HCT116 (cell line): ENCODE measurements at regions of chr4 and their contacts with region 1.

Region 1: DNA sequence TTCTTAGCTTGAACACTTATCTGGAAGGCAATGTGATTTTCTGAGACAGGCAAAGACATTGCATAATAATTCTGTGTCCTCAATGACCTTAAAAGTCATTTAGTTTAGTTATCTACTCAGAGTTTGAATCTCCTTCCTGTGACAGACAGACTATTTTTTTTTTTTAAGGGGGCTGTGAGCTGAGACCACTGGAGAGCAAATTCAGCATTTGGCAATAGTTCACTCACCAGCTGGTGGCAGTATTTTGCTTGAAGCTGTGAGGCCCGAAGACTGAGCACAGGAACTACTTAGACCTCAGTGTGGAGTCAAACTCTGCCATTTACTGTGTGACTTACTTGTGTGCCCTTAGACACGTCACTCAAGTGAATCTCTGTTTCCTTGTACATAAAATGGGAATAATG is 22.9 kb upstream of the CPE start:
- DNase-seq: peak; percentile 59
- ATAC-seq: peak; percentile 93
- H3K4me3 ChIP-seq: no peak overlapping the region
- H3K27ac ChIP-seq: no peak overlapping the region
- H3K4me1 ChIP-seq: peaks cover 0 to 3% of the 10 kb centered on the region in 2 experiments; a peak in 2 of 4 replicates
- H3K27me3 ChIP-seq: no peaks in the 10 kb centered on the region
- CTCF ChIP-seq: peak; percentile 67 to 77 (median 67)
- POLR2A ChIP-seq: no peak
- RAD21 ChIP-seq: peak; percentile 83

Region 2: DNA sequence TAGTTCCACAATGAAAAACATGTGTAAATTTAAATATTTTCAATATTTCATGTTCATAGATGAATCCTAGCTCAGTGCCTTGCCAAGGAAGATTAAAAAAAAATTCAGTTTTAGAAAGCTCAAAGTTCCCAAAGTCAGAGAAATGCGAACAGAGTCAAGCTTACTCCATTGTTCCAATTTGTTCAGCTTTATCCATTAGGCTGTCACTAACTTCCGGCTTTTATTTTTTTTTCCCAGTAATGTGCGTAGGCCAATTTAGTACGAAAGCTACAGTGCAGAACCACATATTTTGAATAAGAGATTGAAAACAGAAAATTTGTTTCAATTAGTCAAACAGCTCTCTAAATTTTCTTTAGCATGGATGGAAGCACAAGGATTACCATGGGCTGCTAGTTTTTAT is 171.7 kb before region 1 on chr4:
- CTCF ChIA-PET with region 1: no interaction called
- POLR2A ChIA-PET with region 1: no interaction called
- RAD21 ChIA-PET with region 1: no interaction called
- intact Hi-C with region 1: no loop called
- DNase-seq: no peak
- ATAC-seq: no peak
- H3K4me3 ChIP-seq: no peak overlapping the region
- H3K27ac ChIP-seq: no peak overlapping the region
- H3K4me1 ChIP-seq: no peaks in the 10 kb centered on the region
- H3K27me3 ChIP-seq: no peaks in the 10 kb centered on the region
- CTCF ChIP-seq: no peak
- POLR2A ChIP-seq: no peak
- RAD21 ChIP-seq: no peak

Region 3: GRCh38 chr4:165294907-165295306 is 61.0 kb before region 1 on chr4:
- CTCF ChIA-PET with region 1: no interaction called
- POLR2A ChIA-PET with region 1: no interaction called
- RAD21 ChIA-PET with region 1: no interaction called
- intact Hi-C with region 1: no loop called
- DNase-seq: no peak
- ATAC-seq: no peak
- H3K4me3 ChIP-seq: no peak overlapping the region
- H3K27ac ChIP-seq: no peak overlapping the region
- H3K4me1 ChIP-seq: no peaks in the 10 kb centered on the region
- H3K27me3 ChIP-seq: no peaks in the 10 kb centered on the region
- CTCF ChIP-seq: no peak
- POLR2A ChIP-seq: no peak
- RAD21 ChIP-seq: no peak

Region 4: DNA sequence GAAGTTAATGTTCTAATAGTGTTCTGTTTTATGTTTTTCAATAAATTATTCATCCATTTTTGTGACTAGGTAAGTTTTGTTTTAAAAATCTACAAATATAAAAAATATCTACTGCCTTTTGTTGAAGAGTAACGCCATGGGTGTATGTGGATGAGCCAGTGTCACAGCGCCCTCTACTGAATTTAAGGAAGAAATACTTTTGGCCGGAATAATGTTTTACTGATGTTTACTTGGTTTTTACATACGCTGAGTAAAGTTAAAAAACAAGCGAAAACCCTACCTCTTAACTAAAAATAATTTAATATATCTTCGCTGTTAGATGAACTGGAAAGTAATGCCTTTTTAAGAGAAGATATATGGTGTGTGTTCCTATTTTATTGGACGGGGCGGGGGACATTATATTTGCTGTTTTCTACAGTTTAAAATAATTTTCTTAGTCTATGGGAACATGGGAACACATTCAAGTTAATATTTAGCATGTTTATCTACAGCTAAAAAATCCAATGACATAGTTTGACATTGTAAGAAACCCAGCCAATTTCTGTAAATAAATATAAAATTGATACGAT is 109.0 kb after region 1 on chr4:
- CTCF ChIA-PET with region 1: interaction called, 5 read pairs
- POLR2A ChIA-PET with region 1: no interaction called
- RAD21 ChIA-PET with region 1: no interaction called
- intact Hi-C with region 1: loop called (anchors 1 kb)
- DNase-seq: no peak
- ATAC-seq: peak; percentile 88
- H3K4me3 ChIP-seq: no peak overlapping the region
- H3K27ac ChIP-seq: no peak overlapping the region
- H3K4me1 ChIP-seq: no peaks in the 10 kb centered on the region
- H3K27me3 ChIP-seq: no peaks in the 10 kb centered on the region
- CTCF ChIP-seq: peak; percentile 64 to 92 (median 78)
- POLR2A ChIP-seq: no peak
- RAD21 ChIP-seq: peak; percentile 94